CD4-positive, alpha-beta memory T cell (primary cell): ENCODE measurements at regions of chr14 and their contacts with region 1.

Region 1: DNA sequence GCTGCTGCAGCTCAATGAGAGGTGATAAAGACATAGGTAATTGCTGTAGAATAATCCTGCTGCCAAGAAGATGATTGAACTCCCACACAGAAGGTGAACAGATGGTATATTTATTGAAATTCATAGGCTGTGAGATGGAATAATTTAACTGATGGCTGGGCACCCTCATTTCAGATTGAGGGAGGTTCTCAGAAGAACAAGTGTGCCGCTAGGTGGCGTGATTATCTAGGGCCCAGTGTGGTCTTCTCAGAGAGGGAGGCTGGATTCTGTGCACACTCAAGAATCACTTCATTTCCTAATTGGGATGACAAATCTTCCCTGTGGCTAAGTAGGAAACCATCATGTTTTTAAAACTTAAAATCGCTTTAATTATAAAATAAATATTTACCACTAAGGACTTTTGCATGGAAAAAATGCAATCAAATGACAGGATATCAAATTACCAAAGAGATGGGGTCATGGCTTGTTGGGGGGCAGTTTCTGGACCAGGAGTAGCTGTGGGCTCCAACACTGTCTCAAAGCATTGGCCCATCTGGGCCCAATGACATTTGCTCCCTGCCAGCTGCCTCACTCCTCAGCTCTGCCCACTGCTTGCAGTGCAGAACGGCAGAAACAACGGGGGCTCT is 132.3 kb downstream of the SNAPC1 start:
- DNase-seq: peak in 4 of 5 donors; percentile 4 to 31 (median 16)
- H3K4me3 ChIP-seq: no peak overlapping the region
- H3K4me3 Mint-ChIP-seq: no peak overlapping the region
- H3K27ac ChIP-seq: no peak overlapping the region
- H3K27ac Mint-ChIP-seq: no peak overlapping the region
- H3K4me1 ChIP-seq: peaks cover 12% of the 10 kb centered on the region
- H3K4me1 Mint-ChIP-seq: peaks cover 8 to 15% (median 11%) of the 10 kb centered on the region in 4 donors
- H3K27me3 ChIP-seq: no peaks in the 10 kb centered on the region
- H3K27me3 Mint-ChIP-seq: peaks cover 2 to 3% of the 10 kb centered on the region in 2 donors

Region 2: DNA sequence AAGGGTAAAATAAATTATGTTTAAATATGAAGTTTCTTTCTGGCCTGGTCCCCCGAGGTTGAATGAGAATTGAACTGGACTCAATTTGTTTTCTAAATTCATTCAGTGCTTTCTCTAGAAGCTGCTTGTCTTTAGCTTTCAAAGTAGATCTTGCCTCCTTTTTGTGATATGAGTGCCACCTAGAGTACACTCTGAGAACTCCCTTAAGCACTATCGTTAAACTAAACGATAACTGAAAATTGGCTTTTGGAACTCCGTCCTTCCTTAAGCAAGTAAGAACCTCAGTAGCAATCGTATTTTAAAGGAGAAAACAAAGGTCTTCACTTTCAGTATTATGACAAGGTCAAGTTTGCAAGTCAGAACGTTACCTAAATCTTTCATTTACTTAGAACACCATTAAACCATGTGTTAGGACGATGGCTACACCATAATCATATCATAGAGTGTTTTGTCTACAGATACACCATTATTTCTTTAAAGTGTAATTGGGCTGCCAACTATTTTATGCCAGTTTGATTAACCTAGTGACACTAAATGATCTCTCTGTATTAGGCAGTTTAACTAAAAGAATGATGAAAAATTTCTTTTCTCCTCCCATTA is 232.4 kb after region 1 on chr14:
- CTCF ChIA-PET with region 1: interaction called, 7 read pairs
- POLR2A ChIA-PET with region 1: no interaction called
- intact Hi-C with region 1: loop called (anchors 1 kb)
- DNase-seq: peak in 4 of 5 donors; percentile 16 to 34 (median 30)
- H3K4me3 ChIP-seq: no peak overlapping the region
- H3K4me3 Mint-ChIP-seq: no peak overlapping the region
- H3K27ac ChIP-seq: no peak overlapping the region
- H3K27ac Mint-ChIP-seq: no peak overlapping the region
- H3K4me1 ChIP-seq: no peaks in the 10 kb centered on the region
- H3K4me1 Mint-ChIP-seq: no peaks in the 10 kb centered on the region
- H3K27me3 ChIP-seq: peaks cover 7% of the 10 kb centered on the region
- H3K27me3 Mint-ChIP-seq: peaks cover 21 to 22% of the 10 kb centered on the region in 2 donors